Sigmoid colon (tissue), 7 donors: ENCODE measurements at regions of chr10 and their contacts with region 1.

Region 1: DNA sequence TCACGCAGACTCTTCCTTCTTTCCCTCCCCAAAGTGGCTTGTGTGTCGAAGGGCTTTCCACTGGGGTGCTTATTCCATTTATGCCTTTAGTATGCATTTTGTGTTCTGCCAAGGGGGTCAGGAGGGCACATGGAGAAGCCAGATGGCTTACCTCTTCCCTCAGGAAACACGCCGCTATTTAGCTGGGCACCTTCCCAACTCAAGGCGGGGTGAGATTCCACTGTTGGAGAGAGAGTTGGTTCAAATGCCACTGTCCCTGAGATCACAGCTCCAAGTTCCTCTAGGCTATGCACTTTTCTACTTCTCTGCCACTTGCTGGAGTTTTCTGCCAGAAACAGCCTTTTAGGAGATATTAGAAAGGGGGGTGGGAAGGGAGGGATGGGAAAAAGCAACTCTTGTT is 1091.8 kb downstream of the LRMDA start:
- DNase-seq: peak; percentile 78
- H3K4me3 ChIP-seq: no peak overlapping the region
- H3K27ac ChIP-seq: peak overlapping the region; percentile 60 to 80 (median 78)
- H3K4me1 ChIP-seq: peaks cover 0 to 30% (median 25%) of the 10 kb centered on the region in 4 donors
- H3K27me3 ChIP-seq: no peaks in the 10 kb centered on the region
- CTCF ChIP-seq: no peak
- EP300 ChIP-seq: no peak
- POLR2A ChIP-seq: no peak

Region 2: DNA sequence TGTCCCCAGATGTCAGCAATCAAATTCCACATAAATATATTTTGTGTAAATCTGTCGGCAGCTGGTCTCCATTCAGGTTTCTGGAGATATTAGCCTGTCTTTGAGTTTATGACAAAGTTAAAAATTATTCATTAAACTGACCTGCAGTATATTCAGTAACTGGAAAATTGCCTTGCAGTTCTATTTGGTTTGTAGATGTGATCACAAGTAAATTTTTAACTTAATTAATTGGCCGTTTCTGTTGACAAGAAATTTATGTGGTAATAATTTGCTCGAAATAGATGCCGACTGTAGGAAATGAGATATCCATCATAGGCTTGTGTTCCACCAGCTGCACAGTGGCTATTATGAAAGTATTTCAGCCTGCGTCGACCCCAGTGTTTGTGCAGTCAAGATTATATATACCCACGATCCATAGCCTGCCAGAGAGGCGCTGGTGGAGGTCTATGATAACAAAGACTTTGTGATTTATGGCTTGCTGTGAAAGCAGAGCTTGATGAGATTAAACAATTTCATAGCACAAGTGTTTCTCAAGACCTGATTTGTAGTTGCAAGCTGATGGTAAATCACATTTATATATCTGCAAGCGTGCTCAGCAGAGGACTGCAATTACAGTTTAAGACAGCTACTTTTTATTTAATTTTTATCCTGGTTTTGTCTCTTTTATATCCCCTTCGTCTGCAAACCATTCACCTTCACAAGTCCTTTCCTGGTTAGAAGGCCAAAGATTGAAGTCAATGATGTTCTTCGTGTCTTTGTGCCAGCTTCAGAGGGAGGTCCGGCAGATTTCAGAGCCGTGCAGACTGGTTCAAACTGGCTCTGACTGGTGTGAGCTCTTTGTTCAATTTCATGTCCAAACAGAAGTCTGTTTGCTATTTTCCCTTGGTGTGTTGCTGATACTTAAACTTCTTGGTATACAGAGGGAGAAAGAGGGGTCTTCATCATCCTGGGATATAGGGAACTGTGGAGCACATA is 240.9 kb before region 1 on chr10:
- intact Hi-C with region 1: loop called (anchors 10 kb)
- DNase-seq: peak; percentile 84
- H3K4me3 ChIP-seq: no peak overlapping the region
- H3K27ac ChIP-seq: peak overlapping the region in 3 of 4 donors; percentile 44 to 59 (median 59)
- H3K4me1 ChIP-seq: peaks cover 0 to 55% (median 42%) of the 10 kb centered on the region in 4 donors
- H3K27me3 ChIP-seq: no peaks in the 10 kb centered on the region
- CTCF ChIP-seq: no peak
- EP300 ChIP-seq: peak in 2 of 4 donors; percentile 12 to 30
- POLR2A ChIP-seq: no peak

Region 3: GRCh38 chr10:76352300-76352699 is 170.9 kb before region 1 on chr10:
- intact Hi-C with region 1: loop called (anchors 1 kb)
- DNase-seq: no peak
- H3K4me3 ChIP-seq: no peak overlapping the region
- H3K27ac ChIP-seq: peak overlapping the region in 3 of 4 donors; percentile 51 to 69 (median 57)
- H3K4me1 ChIP-seq: peaks cover 0 to 53% (median 26%) of the 10 kb centered on the region in 4 donors
- H3K27me3 ChIP-seq: no peaks in the 10 kb centered on the region
- CTCF ChIP-seq: no peak
- EP300 ChIP-seq: no peak
- POLR2A ChIP-seq: no peak

Region 4: GRCh38 chr10:76643511-76643911 is 120.3 kb after region 1 on chr10:
- intact Hi-C with region 1: loop called (anchors 2 kb)
- DNase-seq: peak; percentile 94
- H3K4me3 ChIP-seq: no peak overlapping the region
- H3K27ac ChIP-seq: peak overlapping the region in 3 of 4 donors; percentile 80 to 81 (median 81)
- H3K4me1 ChIP-seq: peaks cover 0 to 91% (median 60%) of the 10 kb centered on the region in 4 donors
- H3K27me3 ChIP-seq: no peaks in the 10 kb centered on the region
- CTCF ChIP-seq: no peak
- EP300 ChIP-seq: peak in 1 of 4 donors; percentile 15
- POLR2A ChIP-seq: no peak

Region 5: DNA sequence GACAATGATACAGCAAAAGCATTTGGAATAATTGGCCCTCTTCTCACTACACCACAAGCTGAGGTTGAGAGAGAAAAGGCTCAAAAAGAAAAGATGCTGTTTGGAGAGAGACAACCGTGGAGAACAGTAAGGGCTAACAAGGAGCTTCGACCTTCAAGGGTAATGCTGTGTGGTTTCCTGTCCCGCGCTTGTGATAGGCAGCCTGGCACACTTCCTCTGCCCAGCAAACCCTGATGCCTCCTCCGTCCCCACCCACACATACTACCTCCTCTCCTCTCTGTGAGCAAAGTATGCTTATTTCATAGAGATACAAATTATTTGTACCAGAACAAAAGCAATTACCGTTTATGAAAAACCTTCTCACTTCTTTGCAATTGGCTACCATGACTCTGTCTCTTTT is 359.0 kb after region 1 on chr10:
- intact Hi-C with region 1: loop called (anchors 10 kb)
- DNase-seq: no peak
- H3K4me3 ChIP-seq: no peak overlapping the region
- H3K27ac ChIP-seq: no peak overlapping the region
- H3K4me1 ChIP-seq: peaks cover 0 to 49% (median 30%) of the 10 kb centered on the region in 4 donors
- H3K27me3 ChIP-seq: no peaks in the 10 kb centered on the region
- CTCF ChIP-seq: no peak
- EP300 ChIP-seq: no peak
- POLR2A ChIP-seq: no peak

Region 6: GRCh38 chr10:77072836-77073662 is 549.8 kb after region 1 on chr10:
- intact Hi-C with region 1: loop called (anchors 5 kb)
- DNase-seq: peak; percentile 96
- H3K4me3 ChIP-seq: no peak overlapping the region
- H3K27ac ChIP-seq: peak overlapping the region; percentile 20 to 82 (median 72)
- H3K4me1 ChIP-seq: peaks cover 0 to 54% (median 38%) of the 10 kb centered on the region in 4 donors
- H3K27me3 ChIP-seq: no peaks in the 10 kb centered on the region
- CTCF ChIP-seq: no peak
- EP300 ChIP-seq: peak; percentile 78 to 97 (median 90)
- POLR2A ChIP-seq: no peak